Heart right ventricle (tissue), 16 donors: ENCODE measurements at regions of chr1 and their contacts with region 1.

Region 1: DNA sequence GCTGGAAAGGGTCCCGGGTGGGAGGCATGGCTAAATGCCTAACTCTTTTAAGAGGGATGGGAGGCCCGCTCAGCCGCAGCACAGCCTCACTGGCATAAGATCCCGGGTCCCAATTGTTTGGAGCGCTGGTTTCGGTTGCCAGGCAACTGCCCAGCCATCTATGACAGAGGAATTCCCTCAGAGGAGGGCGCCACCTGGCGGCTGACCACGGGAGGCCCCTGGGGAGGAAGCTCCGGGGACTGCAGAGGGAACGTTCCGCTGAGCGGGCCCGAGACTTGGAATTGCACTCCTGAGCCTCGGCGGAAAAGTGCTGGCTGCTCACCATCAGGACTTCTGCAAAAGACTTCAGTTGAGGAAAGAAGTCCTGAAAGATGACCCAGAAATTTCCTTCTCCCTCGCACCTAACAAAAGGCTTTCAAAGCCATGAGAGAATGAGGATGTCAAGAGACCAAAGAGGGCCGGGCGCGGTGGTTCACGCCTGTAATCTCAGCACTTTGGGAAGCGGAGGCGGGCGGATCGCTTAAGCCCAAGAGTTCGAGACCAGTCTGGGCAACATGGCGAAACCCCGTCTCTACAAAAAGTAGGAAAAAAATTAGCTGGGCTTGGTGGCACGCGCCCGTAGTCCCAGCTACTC is 1.1 kb upstream of the ELAPOR1 start:
- DNase-seq: peak; percentile 93 to 95
- ATAC-seq: peak; percentile 95 to 99 (median 97)
- H3K4me3 ChIP-seq: peak overlapping the region in 8 of 10 donors; percentile 12 to 50 (median 36)
- H3K27ac ChIP-seq: no peak overlapping the region
- H3K4me1 ChIP-seq: peaks cover 2 to 33% (median 22%) of the 10 kb centered on the region in 9 donors
- H3K27me3 ChIP-seq: peaks cover 7 to 43% (median 38%) of the 10 kb centered on the region in 7 donors
- CTCF ChIP-seq: peak; percentile 93 to 99 (median 98)

Region 2: GRCh38 chr1:108828022-108828961 is 284.5 kb before region 1 on chr1:
- intact Hi-C with region 1: loop called in 1 of 10 experiments (anchors 5 kb)
- DNase-seq: peak; percentile 73 to 82
- ATAC-seq: peak; percentile 57 to 80 (median 70)
- H3K4me3 ChIP-seq: no peak overlapping the region
- H3K27ac ChIP-seq: peak overlapping the region in 8 of 10 donors; percentile 32 to 54 (median 40)
- H3K4me1 ChIP-seq: peaks cover 0 to 39% (median 24%) of the 10 kb centered on the region in 9 donors
- H3K27me3 ChIP-seq: no peaks in the 10 kb centered on the region
- CTCF ChIP-seq: peak; percentile 59 to 90 (median 82)

Region 3: GRCh38 chr1:108947871-108948525 is 164.8 kb before region 1 on chr1:
- intact Hi-C with region 1: loop called in 1 of 10 experiments (anchors 5 kb)
- DNase-seq: no peak
- ATAC-seq: peak in 1 of 8 donors; percentile 56
- H3K4me3 ChIP-seq: peak overlapping the region in 1 of 10 donors; percentile 3
- H3K27ac ChIP-seq: no peak overlapping the region
- H3K4me1 ChIP-seq: peaks cover 0 to 17% (median 13%) of the 10 kb centered on the region in 9 donors
- H3K27me3 ChIP-seq: no peaks in the 10 kb centered on the region
- CTCF ChIP-seq: no peak

Region 4: DNA sequence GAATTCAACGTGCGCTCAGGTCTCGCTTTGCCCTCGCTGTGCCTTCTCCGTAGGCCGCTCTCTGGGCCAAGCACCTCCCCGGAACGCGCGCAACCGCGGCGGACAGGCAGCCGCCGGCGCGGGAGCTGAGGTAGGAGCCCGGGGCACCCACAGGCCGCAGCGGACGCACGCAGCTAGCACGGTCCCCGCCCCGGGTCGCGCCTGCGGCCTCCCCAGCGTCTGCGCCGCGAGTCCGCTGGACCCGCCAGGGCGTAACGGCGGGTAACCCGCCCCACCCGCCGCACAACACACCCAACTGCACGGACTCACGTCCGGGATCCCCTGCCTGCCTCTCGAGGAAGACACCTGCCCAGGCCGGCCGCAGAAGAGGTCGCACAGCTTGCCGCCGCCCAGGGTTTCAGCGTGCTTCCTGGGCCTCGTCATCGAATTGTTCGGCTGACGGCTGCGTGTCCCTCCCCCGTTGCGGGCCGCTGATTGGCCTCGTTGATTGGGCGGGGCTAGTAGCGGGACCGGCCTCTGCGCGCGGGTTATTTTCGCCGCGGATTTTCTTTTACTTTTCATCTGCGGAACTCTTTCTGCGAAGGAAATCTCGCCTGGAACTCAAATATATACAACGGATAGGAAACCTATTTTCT is 149.6 kb before region 1 on chr1 and contains the start of gene CLCC1:
- intact Hi-C with region 1: loop called in 5 of 10 experiments (anchors 2 to 10 kb)
- DNase-seq: peak; percentile 91 to 95
- ATAC-seq: peak; percentile 97 to 99 (median 98)
- H3K4me3 ChIP-seq: peak within 1 kb of the TSS; percentile 55 to 93 (median 79)
- H3K27ac ChIP-seq: peak within 1 kb of the TSS; percentile 92 to 97 (median 96)
- H3K4me1 ChIP-seq: peaks cover 9 to 29% (median 19%) of the 10 kb centered on the region in 9 donors
- H3K27me3 ChIP-seq: no peaks in the 10 kb centered on the region
- CTCF ChIP-seq: peak in 1 of 9 donors; percentile 6
- total RNA-seq, gene CLCC1: 25.5 to 32.5 (median 28.3) TPM

Region 5: DNA sequence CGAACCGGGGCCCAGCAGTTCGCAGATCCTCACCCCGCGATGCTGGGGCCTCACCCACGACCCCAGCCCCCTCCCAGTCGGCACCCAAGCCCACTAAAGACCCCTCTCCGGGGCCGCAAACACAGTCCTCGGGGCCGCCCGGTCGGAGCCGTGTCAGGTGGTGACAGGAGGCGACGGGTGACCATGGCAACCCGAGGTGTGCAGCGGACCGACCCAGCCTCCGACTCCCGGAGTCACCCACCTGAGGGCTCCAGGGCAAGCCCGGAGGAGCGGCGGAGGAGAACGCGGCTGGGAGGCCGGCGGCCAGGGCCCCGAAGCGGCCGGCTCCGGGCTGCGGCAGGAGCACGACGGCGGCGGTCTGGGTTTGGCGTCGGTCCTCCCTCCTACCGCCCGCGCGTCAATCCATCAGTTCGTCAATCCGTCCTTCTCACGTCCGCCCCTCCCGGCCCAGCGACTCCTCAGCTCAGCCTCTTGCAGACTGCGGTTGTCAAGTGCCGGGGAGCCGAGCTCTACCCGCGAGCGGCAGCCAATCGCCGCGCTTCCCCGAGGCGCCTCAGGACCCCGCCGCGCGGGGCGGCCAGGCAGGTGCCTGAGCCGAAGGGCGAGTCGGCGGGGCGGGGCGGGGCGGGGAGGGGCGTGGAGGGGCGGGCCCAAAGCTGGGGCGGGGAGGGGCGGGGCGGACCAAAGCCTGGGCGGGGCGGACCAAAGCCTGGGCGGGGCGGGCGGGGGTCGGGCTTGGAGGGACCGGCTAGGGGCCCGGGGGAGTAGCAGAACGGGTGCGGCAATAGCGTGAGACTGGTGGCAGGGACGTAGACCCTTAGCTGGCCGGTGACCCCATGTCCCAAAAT is 70.9 kb before region 1 on chr1 and contains the start of gene WDR47:
- intact Hi-C with region 1: loop called in 2 of 10 experiments (anchors 1 to 10 kb)
- DNase-seq: peak; percentile 94 to 95
- ATAC-seq: peak; percentile 97 to 99 (median 98)
- H3K4me3 ChIP-seq: peak within 1 kb of the TSS; percentile 89 to 100 (median 96)
- H3K27ac ChIP-seq: peak within 1 kb of the TSS; percentile 54 to 93 (median 89)
- H3K4me1 ChIP-seq: peaks cover 0 to 20% (median 13%) of the 10 kb centered on the region in 9 donors
- H3K27me3 ChIP-seq: no peaks in the 10 kb centered on the region
- CTCF ChIP-seq: no peak
- total RNA-seq, gene WDR47: 10.7 to 20.6 (median 14.4) TPM

Region 6: GRCh38 chr1:109193653-109194590 is 81.2 kb after region 1 on chr1:
- intact Hi-C with region 1: loop called in 2 of 10 experiments (anchors 10 kb)
- DNase-seq: peak in 1 of 2 donors; percentile 16
- ATAC-seq: no peak
- H3K4me3 ChIP-seq: no peak overlapping the region
- H3K27ac ChIP-seq: no peak overlapping the region
- H3K4me1 ChIP-seq: peaks cover 0 to 18% (median 8%) of the 10 kb centered on the region in 9 donors
- H3K27me3 ChIP-seq: no peaks in the 10 kb centered on the region
- CTCF ChIP-seq: peak in 7 of 9 donors; percentile 33 to 67 (median 38)